ENCODE measurements at regions of chr16 and their contacts with region 1.

Region 1: GRCh38 chr16:50024684-50025536 is at the start of gene CNEP1R1:
- H3K4me3 ChIP-seq: peak within 1 kb of the TSS; percentile 84
- H3K27ac ChIP-seq: peak within 1 kb of the TSS; percentile 54; the same call in 1 of the 2 replicates
- H3K4me1 ChIP-seq: peaks cover 4% of the 10 kb centered on the region; the same call in 1 of the 2 replicates
- CTCF ChIP-seq: peak; percentile 100

Region 2: GRCh38 chr16:50011707-50012106 is 13.2 kb before region 1 on chr16:
- CTCF ChIA-PET with region 1: interaction called, 17 read pairs
- POLR2A ChIA-PET with region 1: no interaction called
- H3K4me3 ChIP-seq: no peak overlapping the region
- H3K27ac ChIP-seq: no peak overlapping the region
- H3K4me1 ChIP-seq: no peaks in the 10 kb centered on the region
- CTCF ChIP-seq: no peak

Region 3: DNA sequence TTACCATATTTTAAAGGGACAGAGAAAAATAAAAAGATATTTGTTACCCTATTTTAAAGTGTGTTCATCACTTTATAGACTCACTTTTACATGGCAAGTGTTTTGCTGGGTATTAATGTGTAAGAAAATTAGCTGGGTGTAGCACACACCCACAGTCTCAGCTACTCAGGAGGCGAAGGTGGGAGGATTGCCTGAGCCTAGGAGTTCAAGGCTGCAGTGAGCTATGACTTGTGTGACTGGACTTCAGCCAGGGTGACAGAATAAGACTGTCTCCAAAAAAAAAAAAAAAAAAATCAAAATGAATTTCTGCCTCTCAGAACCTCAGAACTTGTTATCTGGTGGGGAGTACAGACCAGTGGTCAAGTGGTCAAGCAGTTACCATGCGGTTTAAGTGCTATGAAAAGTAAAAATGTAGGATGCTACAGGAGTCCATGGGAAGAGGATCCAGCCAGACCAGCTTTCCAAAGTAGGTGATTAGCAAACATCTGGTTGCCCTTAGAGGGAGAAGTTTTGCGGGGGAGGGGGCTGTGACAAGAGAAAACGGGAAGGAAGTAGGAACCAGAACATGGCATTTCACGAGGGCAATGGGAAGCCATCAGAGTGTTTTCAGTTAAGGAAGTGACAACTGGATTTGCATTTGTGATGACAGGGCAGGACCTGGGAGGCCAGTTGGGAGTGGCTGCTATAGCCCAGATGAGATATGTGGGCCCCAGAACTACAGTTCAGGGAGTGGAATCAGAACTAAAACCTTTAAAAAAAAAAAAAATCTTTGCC is 14.0 kb after region 1 on chr16:
- CTCF ChIA-PET with region 1: interaction called, 32 read pairs
- POLR2A ChIA-PET with region 1: no interaction called
- H3K4me3 ChIP-seq: no peak overlapping the region
- H3K27ac ChIP-seq: no peak overlapping the region
- H3K4me1 ChIP-seq: no peaks in the 10 kb centered on the region
- CTCF ChIP-seq: no peak

Region 4: GRCh38 chr16:50059669-50060068 is 34.8 kb after region 1 on chr16:
- CTCF ChIA-PET with region 1: interaction called, 10 read pairs
- POLR2A ChIA-PET with region 1: interaction called, 3 read pairs
- H3K4me3 ChIP-seq: no peak overlapping the region
- H3K27ac ChIP-seq: no peak overlapping the region
- H3K4me1 ChIP-seq: no peaks in the 10 kb centered on the region
- CTCF ChIP-seq: no peak

Region 5: DNA sequence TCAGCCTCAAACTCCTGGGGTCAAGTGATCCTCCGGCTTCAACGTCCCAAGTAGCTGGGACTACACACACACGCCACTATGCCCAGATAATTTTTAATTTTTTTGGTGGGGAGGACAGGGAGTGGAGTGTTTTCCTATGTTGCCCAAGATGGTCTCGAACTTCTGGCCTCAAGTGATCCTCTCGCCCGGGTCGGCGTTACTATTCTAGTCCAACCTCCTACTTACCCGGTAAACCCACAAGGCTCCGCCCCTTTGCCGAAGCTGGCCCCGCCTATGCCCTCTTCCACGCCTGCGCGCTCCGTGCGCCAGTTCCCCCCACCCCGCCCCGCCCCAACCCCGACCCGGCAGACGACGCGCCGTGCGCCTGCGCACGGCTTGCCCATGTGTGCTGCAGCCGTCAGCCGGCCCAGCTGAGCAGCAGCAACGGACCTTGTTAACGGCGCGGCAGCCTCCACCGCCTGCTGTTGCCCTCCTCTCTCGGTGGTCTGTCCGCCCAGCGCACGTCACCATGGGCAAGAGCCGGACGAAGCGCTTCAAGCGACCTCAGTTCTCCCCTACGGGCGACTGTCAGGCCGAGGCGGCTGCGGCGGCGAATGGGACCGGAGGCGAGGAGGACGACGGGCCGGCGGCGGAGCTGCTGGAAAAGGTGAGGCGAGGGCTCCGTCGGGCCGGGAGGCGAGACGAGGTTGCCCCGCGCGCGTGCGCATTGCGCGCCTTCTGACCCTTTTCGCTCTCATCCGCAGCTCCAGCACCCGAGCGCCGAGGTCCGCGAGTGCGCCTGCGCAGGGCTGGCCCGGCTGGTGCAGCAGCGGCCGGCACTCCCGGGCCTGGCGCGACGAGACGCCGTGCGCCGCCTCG is 40.9 kb after region 1 on chr16 and contains the start of gene HEATR3:
- CTCF ChIA-PET with region 1: interaction called, 18 read pairs
- POLR2A ChIA-PET with region 1: interaction called, 14 read pairs
- H3K4me3 ChIP-seq: peak within 1 kb of the TSS; percentile 98
- H3K27ac ChIP-seq: peak within 1 kb of the TSS; percentile 97
- H3K4me1 ChIP-seq: no peaks in the 10 kb centered on the region
- CTCF ChIP-seq: no peak

Region 6: DNA sequence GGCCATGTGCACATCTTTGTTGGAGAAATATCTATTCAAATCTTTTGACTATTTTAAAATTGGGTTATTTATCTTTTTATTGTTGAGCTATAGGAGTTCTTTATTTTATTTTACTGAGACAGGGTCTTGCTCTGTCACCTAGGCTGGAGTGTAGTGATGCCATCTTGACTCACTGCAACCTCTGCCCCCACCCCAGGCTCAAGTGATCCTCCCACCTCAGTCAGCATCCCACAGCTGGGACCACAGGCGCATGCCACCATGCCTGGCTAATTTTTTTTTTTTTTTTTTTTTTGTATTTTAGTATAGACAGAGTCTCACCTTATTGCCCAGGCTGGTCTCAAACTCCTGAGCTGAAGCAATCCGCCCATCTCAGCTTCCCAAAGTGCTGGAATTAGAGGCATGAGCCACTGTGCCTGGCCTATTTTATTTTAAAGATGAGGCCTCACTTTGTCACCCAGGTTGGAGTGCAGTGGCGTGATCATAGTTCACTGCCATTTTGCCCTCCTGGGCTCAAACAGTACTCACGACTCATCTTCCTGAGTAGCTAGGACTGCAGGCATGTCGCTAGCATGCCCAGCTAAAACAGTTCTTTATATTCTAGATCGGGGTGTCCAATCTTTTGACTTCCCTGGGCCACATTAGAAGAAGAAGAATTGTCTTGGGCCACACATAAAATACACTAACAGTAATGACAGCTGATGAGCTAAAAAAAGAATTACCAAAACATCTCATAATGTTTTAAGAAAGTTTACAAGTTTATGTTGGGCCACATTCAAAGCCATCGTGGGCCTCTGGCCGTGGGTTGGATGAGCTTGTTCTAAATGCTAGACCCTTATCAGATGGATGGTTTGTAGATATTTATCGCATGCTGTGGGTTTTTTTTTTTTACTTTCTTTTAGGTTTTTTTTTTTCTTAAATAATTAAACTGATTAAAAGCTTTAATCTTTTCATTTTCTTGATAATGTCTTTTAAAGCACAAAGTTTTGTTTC is 141.9 kb after region 1 on chr16:
- CTCF ChIA-PET with region 1: interaction called, 10 read pairs
- POLR2A ChIA-PET with region 1: no interaction called
- H3K4me3 ChIP-seq: no peak overlapping the region
- H3K27ac ChIP-seq: peak overlapping the region; percentile 32; the same call in 1 of the 2 replicates
- H3K4me1 ChIP-seq: peaks cover 10% of the 10 kb centered on the region; the same call in 1 of the 2 replicates
- CTCF ChIP-seq: no peak

Region 7: GRCh38 chr16:50354629-50355456 is 329.9 kb after region 1 on chr16:
- CTCF ChIA-PET with region 1: interaction called, 12 read pairs
- POLR2A ChIA-PET with region 1: no interaction called
- H3K4me3 ChIP-seq: no peak overlapping the region
- H3K27ac ChIP-seq: no peak overlapping the region
- H3K4me1 ChIP-seq: no peaks in the 10 kb centered on the region
- CTCF ChIP-seq: no peak